Heart right ventricle (tissue), 16 donors: ENCODE measurements at regions of chr6 and their contacts with region 1.

Region 1: GRCh38 chr6:14210663-14211561 is 93.3 kb downstream of the CD83 start:
- DNase-seq: peak; percentile 95
- ATAC-seq: peak; percentile 93 to 98 (median 96)
- H3K4me3 ChIP-seq: peak overlapping the region; percentile 47 to 95 (median 70)
- H3K27ac ChIP-seq: peak overlapping the region; percentile 32 to 94 (median 88)
- H3K4me1 ChIP-seq: peaks cover 0 to 22% (median 17%) of the 10 kb centered on the region in 9 donors
- H3K27me3 ChIP-seq: no peaks in the 10 kb centered on the region
- CTCF ChIP-seq: peak; percentile 54 to 95 (median 65)

Region 2: DNA sequence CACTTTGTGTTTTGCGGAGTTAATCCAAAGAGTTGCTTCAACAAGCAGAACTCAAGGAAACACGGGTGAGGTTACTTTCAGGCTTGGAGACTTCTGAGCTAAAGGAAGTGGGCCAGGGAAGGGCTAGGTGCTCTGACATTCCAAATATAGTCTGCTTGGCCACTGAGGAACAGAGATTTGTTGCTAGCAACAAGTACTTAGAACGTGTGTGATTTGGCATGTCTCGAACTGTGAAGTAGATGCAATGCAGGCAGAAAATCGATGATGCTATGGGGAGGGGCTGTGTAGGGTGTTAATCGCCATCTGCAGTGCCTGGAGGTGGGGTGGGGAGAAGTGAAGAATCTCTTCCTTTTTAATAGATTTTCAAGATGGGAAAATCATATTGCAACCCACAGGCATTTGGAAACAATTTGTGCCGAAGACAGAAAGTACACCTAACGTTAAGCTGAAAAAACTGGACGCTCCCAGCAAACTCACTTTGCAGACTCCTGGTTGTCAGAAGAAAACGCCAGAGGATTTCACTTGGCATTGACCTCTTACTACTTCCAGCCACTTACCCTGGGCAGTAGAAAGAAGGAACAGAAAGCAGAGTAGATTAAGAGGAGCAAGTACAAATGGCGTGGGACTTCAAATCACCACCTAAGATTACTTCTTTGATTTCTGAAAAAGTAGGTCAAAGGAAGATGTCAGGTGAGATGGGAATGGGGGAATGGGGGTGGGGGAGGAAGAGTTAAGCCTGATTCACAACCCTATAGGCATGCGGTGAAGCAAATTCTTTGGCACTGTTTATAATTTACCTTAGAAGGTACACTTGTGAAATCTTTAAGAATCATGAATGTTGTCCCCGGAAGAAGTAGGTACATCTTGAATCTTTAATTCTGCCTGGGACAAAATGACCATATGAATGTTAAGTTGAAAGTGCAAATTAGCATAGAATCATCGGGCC is 220.7 kb after region 1 on chr6:
- intact Hi-C with region 1: loop called in 1 of 10 experiments (anchors 10 kb)
- DNase-seq: peak in 1 of 2 donors; percentile 44
- ATAC-seq: peak; percentile 83 to 95 (median 94)
- H3K4me3 ChIP-seq: peak overlapping the region in 9 of 10 donors; percentile 16 to 52 (median 40)
- H3K27ac ChIP-seq: peak overlapping the region in 9 of 10 donors; percentile 48 to 77 (median 62)
- H3K4me1 ChIP-seq: peaks cover 0 to 38% (median 0%) of the 10 kb centered on the region in 9 donors
- H3K27me3 ChIP-seq: no peaks in the 10 kb centered on the region
- CTCF ChIP-seq: no peak

Region 3: DNA sequence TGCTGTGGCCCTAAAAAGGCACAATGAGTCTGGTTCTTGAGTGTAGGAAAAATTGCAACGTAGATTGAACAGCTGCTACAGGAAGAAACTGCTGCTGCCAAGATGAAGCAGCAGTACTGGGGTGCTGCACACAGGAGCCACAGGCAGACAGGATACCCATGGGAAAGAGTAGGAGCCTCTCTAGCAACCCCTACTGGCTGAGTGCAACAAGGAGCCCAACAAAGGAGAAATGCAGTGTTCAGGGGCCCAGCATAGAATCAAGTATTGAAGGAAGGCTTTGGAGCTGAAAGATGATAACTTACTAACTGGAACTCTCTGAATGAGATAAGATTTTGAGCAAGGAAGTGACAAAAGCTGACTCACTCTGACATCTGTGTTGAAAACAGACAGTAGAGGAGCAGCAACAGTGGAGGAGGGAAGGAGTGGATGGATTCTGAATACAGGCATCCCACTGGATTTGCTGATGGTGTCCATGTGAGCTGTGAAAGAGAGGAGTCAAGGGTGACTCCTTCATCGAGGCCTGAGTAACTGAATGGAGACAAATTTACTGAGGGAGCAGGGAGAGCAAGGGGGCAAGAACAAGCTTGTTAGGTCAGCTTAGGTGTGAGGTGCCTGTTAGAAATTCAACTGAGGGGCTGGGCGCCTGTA is 500.3 kb after region 1 on chr6:
- intact Hi-C with region 1: loop called in 4 of 10 experiments (anchors 5 to 10 kb)
- DNase-seq: peak in 1 of 2 donors; percentile 49
- ATAC-seq: peak in 1 of 8 donors; percentile 12
- H3K4me3 ChIP-seq: no peak overlapping the region
- H3K27ac ChIP-seq: peak overlapping the region in 1 of 10 donors; percentile 73
- H3K4me1 ChIP-seq: peaks cover 7 to 49% (median 32%) of the 10 kb centered on the region in 9 donors
- H3K27me3 ChIP-seq: no peaks in the 10 kb centered on the region
- CTCF ChIP-seq: peak; percentile 22 to 73 (median 46)

Region 4: GRCh38 chr6:15264902-15265761 is 1054.2 kb after region 1 on chr6:
- intact Hi-C with region 1: loop called in 2 of 10 experiments (anchors 10 kb)
- DNase-seq: peak in 1 of 2 donors; percentile 42
- ATAC-seq: peak; percentile 45 to 79 (median 66)
- H3K4me3 ChIP-seq: peak overlapping the region in 4 of 10 donors; percentile 12 to 18 (median 14)
- H3K27ac ChIP-seq: peak overlapping the region in 9 of 10 donors; percentile 40 to 84 (median 70)
- H3K4me1 ChIP-seq: peaks cover 22 to 89% (median 77%) of the 10 kb centered on the region in 9 donors
- H3K27me3 ChIP-seq: no peaks in the 10 kb centered on the region
- CTCF ChIP-seq: no peak

Region 5: DNA sequence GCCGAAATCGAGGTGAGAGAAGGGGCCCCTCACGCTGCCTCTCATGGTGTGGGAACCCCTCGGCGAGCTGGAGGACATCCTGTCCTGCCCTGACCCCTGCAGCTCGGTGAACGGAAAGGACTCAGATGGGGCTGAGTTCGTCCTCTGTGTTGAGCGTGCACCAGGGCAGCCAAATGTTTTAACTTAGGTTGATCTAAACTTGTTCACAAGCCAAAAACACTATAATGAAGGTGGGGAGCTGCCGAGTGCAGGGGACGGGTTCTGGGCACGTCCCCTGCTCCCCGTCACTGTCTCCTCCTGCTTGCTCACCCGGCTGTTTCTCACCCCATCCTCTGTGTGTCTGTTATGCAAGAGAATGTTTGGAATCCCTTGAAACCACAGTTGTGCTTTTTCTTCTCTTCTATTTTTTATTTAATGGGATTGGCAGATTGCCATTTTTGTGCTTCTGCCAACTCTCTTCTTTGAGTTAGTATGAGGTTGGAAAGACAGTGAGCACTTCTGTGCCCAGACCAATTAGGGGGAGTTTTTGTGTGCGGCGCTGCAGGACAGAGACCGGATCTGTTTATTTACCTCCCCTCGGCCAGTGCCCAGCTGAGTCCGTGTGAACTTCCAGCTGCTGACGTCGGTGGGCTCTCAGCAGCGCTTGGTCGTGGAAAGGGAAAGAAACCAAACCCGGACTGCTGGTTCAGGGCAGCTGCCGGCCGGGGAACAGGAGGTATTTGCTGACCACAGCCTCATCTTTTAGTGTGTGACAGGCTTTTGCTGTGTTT is 1293.9 kb after region 1 on chr6:
- intact Hi-C with region 1: loop called in 4 of 10 experiments (anchors 5 to 10 kb)
- DNase-seq: peak; percentile 73 to 75
- ATAC-seq: peak; percentile 59 to 86 (median 80)
- H3K4me3 ChIP-seq: peak overlapping the region in 8 of 10 donors; percentile 6 to 42 (median 28)
- H3K27ac ChIP-seq: peak overlapping the region; percentile 46 to 88 (median 78)
- H3K4me1 ChIP-seq: peaks cover 15 to 64% (median 51%) of the 10 kb centered on the region in 9 donors
- H3K27me3 ChIP-seq: no peaks in the 10 kb centered on the region
- CTCF ChIP-seq: peak in 1 of 9 donors; percentile 4